Right cardiac atrium (tissue), 5 donors: ENCODE measurements at regions of chr11 and their contacts with region 1.

Region 1: GRCh38 chr11:131217313-131218310 is 152.8 kb upstream of the NTM start:
- DNase-seq: no peak
- ATAC-seq: no peak
- H3K4me3 ChIP-seq: no peak overlapping the region
- H3K27ac ChIP-seq: no peak overlapping the region
- H3K4me1 ChIP-seq: no peaks in the 10 kb centered on the region
- H3K27me3 ChIP-seq: no peaks in the 10 kb centered on the region

Region 2: DNA sequence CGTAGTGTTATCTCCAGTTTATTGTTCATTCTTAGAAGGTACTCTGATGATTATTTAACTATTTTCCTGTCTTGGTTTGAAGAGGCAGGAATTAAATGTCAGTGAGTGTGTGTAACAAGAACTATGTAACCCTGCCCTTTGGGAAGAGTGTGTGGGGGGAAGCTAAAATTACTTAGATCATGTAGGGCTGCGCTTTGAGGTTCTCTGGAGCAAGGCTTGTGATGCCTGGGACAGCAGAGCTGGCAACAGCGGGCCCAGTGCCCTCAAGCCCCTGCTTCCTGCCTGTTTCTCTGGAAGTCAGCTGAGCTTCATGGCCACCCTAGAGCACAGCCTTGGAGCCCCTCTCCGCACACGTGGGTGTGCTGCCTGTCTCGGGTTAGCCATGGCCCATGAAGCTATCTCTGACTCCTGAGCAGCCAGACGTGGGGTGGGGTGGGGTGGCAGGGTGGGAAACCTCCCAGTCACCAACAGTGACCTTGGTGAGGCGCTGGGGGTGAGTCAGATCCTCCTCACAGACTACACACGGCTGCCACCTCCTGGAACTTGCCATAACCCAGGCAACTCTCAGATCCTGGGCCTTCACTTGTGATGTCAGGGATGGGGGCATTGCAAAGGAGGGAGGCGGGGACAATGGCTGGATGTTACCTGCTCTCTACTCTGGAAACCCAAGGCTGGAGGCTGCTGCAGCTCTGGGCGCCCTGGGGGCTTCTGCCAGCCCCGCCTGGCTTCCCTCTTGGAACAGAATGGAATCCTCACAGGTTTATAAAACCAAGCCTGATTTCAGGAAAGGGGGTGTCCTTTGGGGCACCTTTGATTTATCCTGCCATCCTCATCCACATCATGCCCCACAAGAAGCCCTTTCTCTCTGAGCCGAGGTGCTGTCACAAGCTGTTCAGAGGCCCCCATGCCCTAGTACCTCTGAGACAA is 389.9 kb before region 1 on chr11:
- intact Hi-C with region 1: no loop called
- DNase-seq: peak; percentile 78 to 86 (median 82)
- ATAC-seq: peak; percentile 84 to 95
- H3K4me3 ChIP-seq: no peak overlapping the region
- H3K27ac ChIP-seq: no peak overlapping the region
- H3K4me1 ChIP-seq: peaks cover 11% of the 10 kb centered on the region
- H3K27me3 ChIP-seq: no peaks in the 10 kb centered on the region

Region 3: GRCh38 chr11:131077340-131077739 is 140.3 kb before region 1 on chr11:
- intact Hi-C with region 1: loop called in 1 of 4 experiments (anchors 10 kb)
- DNase-seq: no peak
- ATAC-seq: no peak
- H3K4me3 ChIP-seq: no peak overlapping the region
- H3K27ac ChIP-seq: no peak overlapping the region
- H3K4me1 ChIP-seq: no peaks in the 10 kb centered on the region
- H3K27me3 ChIP-seq: no peaks in the 10 kb centered on the region